Left colon (tissue), 2 donors: ENCODE measurements at regions of chr4 and their contacts with region 1.

Region 1: DNA sequence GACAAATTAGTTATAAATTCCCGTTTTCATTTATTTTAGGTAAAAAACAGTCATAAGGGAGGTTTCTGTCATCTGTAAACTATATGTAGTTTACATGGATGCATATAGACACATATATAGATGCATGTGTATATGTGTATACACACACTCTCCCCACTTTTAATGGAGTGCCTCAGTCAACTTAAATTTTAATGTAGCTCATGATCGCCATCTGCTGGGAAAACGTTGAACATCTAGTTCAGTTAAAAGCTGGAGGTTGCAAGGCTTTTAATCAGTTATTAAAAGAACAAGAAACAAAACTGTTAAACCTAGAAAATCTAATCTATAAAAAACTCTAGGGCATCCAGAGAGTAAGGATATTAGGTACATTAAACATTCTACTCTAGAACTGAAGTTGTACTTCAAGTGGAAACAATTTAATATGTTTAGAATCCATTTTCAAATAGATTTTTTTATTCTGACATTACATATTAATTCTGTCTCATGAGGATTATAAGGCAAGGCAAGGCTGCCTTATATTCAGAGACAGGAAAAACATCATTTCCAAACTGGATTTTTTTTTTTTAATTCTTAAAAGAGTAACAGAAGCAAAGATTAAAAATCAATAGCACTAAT is 122.6 kb downstream of the SHISA3 start:
- DNase-seq: peak in 1 of 2 donors; percentile 58
- ATAC-seq: peak; percentile 57

Region 2: DNA sequence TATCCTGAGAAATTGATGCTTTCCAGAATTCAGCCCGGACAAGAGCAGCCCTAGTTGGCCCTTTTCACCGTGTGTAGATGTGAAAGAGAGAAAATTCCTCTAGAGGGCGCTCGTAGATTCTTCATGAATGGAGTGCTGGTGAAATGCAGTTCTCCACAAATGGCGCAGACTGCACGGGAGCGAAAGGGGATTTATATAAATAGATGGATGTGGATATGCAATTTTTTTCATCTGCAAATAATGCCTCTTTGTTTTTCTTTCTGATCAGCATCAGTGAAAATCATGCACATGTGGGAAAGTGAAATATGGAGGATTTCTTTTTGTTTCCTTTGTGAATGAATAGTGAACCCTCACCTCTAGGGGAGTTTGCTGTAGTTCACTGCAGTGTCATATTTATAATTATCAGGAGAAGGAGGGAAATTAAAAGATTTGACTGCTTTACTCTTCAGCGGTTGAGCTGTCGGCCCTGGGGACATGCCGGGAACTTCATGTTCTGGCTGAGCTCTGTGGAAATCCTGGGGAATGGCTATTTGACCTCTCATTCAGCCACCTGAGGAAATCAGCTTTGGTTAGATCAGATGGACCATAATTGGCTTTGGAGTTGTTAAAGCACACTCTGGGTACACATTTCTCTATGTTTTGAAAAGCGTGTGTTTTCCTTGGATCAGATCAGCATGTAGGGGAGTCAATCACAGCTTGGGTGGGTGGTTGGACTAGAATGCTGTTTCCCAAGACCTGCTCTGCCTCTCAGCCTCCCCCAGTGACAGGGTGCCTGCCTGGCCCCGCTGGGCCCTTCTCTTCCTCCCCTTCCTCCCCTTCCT is 237.6 kb before region 1 on chr4:
- intact Hi-C with region 1: loop called (anchors 5 to 10 kb)
- DNase-seq: peak in 1 of 2 donors; percentile 21
- ATAC-seq: peak; percentile 88

Region 3: GRCh38 chr4:42359711-42360110 is 160.2 kb before region 1 on chr4:
- intact Hi-C with region 1: loop called in 1 of 2 experiments (anchors 5 kb)
- DNase-seq: no peak
- ATAC-seq: no peak